ENCODE measurements at regions of chr12 and their contacts with region 1.

Region 1: GRCh38 chr12:43282106-43282505 is 269.9 kb downstream of the ADAMTS20 start:
- DNase-seq: peak; percentile 58
- ATAC-seq: no peak
- H3K4me3 ChIP-seq: no peak overlapping the region
- H3K27ac ChIP-seq: no peak overlapping the region
- H3K4me1 ChIP-seq: peaks cover 45% of the 10 kb centered on the region
- H3K27me3 ChIP-seq: no peaks in the 10 kb centered on the region
- CTCF ChIP-seq: peak; percentile 79

Region 2: GRCh38 chr12:42469355-42470175 is 812.5 kb before region 1 on chr12:
- CTCF ChIA-PET with region 1: no interaction called
- POLR2A ChIA-PET with region 1: no interaction called
- intact Hi-C with region 1: loop called (anchors 2 kb)
- DNase-seq: no peak
- ATAC-seq: no peak
- H3K4me3 ChIP-seq: no peak overlapping the region
- H3K27ac ChIP-seq: no peak overlapping the region
- H3K4me1 ChIP-seq: peaks cover 18% of the 10 kb centered on the region
- H3K27me3 ChIP-seq: no peaks in the 10 kb centered on the region
- CTCF ChIP-seq: no peak

Region 3: GRCh38 chr12:42589465-42590329 is 692.4 kb before region 1 on chr12 and contains the start of gene PRICKLE1:
- CTCF ChIA-PET with region 1: no interaction called
- POLR2A ChIA-PET with region 1: no interaction called
- intact Hi-C with region 1: loop called (anchors 1 kb)
- DNase-seq: peak; percentile 57
- ATAC-seq: peak; percentile 45
- H3K4me3 ChIP-seq: peak within 1 kb of the TSS; percentile 97
- H3K27ac ChIP-seq: 0 out of 2 replicates have a peak within 1 kb of the TSS, but pooled peaks have one; percentile 5
- H3K4me1 ChIP-seq: peaks cover 45% of the 10 kb centered on the region
- H3K27me3 ChIP-seq: no peaks in the 10 kb centered on the region
- CTCF ChIP-seq: no peak
- total RNA-seq, gene PRICKLE1: 16.2 and 17.2 TPM in 2 replicates

Region 4: DNA sequence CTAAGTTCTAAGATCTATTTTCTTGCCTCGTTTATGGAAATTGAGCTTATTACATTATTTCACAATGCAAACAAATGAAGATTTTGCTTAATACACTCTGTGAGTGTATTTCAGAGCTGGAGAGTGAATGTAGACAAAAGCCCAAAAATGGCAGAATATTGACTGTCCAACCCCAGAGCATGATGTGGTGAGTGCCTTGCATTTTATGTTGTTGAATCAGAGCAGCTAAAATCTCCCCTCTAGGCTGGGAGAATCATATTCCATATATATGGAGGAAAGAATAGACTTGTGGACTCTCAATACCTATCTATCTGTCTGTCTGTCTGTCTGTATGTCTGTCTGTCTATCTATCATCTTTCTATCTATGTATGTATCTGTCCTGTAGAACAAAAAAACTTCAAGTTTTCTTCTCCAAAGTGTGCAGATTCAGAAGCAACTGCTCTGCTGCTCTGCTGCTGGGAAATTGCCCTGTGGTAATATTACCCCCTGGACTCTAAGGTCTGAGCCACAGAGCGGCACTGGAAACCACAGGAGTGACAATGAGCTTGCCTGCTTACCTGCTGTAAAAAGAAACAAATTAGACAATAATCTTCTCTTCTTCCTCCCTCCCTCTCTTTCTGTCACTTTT is 483.2 kb before region 1 on chr12:
- CTCF ChIA-PET with region 1: no interaction called
- POLR2A ChIA-PET with region 1: no interaction called
- intact Hi-C with region 1: loop called (anchors 5 kb)
- DNase-seq: peak; percentile 43
- ATAC-seq: peak; percentile 21; the same call in 1 of the 2 replicates
- H3K4me3 ChIP-seq: no peak overlapping the region
- H3K27ac ChIP-seq: no peak overlapping the region
- H3K4me1 ChIP-seq: peaks cover 20% of the 10 kb centered on the region
- H3K27me3 ChIP-seq: no peaks in the 10 kb centered on the region
- CTCF ChIP-seq: no peak

Region 5: DNA sequence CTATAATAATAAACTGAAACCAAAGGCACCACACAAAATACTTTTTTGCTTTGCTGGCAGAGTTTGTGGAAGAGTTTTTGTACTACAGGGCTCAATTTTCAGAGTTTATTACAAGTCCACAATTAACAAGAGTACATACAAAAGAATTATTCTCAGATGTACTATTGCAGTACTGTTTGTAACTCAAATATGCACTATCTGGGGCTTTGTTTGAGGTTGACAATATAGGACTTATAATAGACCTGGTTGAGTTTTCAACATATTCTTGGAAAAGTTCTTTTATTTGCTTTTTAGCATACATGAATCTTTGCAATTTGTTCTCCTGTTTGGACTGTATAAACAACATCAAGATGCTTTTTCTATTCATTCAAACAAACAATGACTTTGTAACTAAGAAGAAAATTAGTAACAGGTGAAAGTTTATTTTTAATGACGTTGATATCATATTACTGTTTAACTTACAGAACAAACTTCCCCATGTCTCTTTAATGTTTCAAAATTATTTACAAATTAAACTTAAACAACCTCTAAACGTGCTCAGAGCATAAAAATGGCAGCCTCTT is 285.2 kb before region 1 on chr12:
- CTCF ChIA-PET with region 1: no interaction called
- POLR2A ChIA-PET with region 1: no interaction called
- intact Hi-C with region 1: loop called (anchors 1 kb)
- DNase-seq: peak; percentile 31
- ATAC-seq: peak; percentile 73
- H3K4me3 ChIP-seq: no peak overlapping the region
- H3K27ac ChIP-seq: peak overlapping the region; percentile 37
- H3K4me1 ChIP-seq: peaks cover 17% of the 10 kb centered on the region
- H3K27me3 ChIP-seq: no peaks in the 10 kb centered on the region
- CTCF ChIP-seq: no peak

Region 6: DNA sequence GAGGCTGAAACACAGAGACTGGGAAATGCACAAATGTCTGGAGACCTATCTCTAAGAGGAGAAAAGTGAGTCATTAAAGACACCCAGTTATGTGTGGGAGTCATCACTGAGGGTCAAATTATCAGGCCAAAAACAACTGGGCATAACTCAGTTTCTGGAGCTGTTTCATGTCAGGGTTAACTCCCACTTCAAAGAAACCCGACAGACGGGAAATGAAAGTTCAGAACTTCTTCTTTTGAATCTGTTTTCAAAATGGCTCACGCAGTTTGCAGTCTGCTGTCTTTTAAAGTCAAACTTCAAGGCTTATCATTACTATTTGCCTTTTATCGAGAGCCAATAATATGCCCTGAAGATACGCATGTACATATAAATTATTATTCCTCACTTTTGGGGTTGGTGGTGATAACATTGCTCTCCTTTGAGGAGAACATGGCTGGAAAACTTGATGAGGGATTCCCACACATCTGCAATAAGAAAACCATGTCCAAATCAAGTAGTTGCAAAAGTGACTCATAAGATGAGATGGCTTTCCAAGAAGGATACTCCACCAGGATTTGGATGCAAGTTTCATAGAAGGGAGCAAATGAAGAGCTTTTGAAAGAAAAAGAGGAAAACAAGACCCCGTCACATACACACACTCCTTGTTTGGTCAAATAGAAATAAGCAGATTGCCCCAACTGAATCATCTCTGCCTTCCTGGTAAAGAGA is 71.5 kb before region 1 on chr12:
- CTCF ChIA-PET with region 1: no interaction called
- POLR2A ChIA-PET with region 1: no interaction called
- intact Hi-C with region 1: loop called (anchors 5 kb)
- DNase-seq: peak; percentile 31
- ATAC-seq: no peak
- H3K4me3 ChIP-seq: no peak overlapping the region
- H3K27ac ChIP-seq: no peak overlapping the region
- H3K4me1 ChIP-seq: peaks cover 9% of the 10 kb centered on the region
- H3K27me3 ChIP-seq: no peaks in the 10 kb centered on the region
- CTCF ChIP-seq: no peak

Measured in PC-3 (cell line).